Activated naive CD4-positive, alpha-beta T cell treated with anti-CD3 and anti-CD28 coated beads for 36 hours (primary cell): ENCODE measurements at regions of chr20 and their contacts with region 1.

Region 1: DNA sequence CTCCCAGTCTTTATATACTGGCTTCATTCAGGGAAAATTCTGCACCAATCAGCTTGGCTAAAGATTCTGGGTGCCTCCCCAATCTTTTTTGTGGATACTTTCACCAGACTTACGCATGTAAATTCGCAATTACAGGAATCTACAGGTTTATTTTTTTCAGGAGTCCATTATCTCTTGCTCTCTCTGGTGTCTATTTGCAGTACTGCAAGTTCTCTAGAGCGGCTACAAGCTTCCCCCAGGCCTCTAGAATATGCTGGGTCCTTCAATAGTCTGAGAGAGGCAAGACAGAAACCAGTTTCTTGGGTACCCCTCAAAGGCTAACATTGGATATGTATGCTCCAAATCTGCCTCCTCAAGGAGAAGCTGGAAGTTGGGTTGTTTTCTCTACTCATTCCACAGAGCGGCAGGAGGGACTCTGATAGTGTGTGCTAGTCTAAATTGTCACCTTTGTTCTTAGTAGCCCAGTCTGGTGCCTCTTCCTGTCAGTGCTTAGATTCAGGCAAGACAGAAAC is 58.5 kb downstream of the SUN5 start:
- DNase-seq: peak; percentile 58
- H3K4me3 Mint-ChIP-seq: peak overlapping the region; percentile 23
- H3K27ac Mint-ChIP-seq: peak overlapping the region; percentile 92
- H3K4me1 Mint-ChIP-seq: peaks cover 37% of the 10 kb centered on the region
- H3K27me3 Mint-ChIP-seq: no peaks in the 10 kb centered on the region

Region 2: DNA sequence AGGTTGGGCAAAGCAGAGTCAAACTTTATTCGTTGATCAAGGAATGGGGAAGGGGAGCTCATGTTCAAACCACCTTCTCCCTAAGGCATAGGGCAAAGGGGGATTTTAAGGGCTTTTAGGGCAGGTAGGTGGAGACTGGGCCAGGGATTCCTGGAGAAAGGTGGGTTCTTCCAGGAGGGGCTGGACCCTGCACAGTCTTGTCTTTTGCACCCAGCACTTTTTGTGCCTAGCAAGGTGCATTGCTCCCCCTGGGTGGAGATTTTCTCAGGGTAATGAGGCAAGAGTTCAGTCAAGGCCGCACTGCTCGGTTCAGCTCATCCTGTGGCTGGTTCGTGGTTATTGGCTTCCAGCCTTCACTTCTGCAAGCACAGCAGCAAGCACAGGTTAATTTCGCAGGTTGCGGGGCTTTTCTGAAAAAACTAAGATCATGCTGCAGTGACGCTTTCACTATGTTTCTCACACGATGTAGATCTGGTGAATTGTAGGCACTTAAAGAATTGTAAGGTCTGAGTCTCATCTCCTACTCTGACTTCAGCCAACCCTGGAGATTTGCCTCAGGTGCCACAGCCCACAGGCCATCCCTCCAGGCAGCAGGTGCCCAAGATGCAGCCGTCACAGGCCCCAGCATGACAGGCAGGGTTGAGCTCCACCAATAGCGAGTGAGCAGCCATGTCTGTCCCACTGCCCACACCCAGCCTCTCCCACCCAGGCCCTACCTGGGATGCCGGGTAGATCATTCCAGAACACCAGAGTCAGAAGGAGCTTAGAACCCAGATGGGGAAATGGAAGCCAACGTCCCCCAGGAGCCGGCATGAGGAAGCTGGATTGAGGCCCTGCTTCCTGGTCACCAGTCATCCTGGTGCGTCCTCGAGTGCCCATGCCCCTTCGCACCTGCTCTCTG is 21.4 kb after region 1 on chr20:
- CTCF ChIA-PET with region 1: interaction called, 44 read pairs
- intact Hi-C with region 1: loop called (anchors 1 kb)
- DNase-seq: peak; percentile 86
- H3K4me3 Mint-ChIP-seq: peak overlapping the region; percentile 57
- H3K27ac Mint-ChIP-seq: no peak overlapping the region
- H3K4me1 Mint-ChIP-seq: peaks cover 76% of the 10 kb centered on the region
- H3K27me3 Mint-ChIP-seq: no peaks in the 10 kb centered on the region

Region 3: GRCh38 chr20:32972181-32973076 is 26.7 kb after region 1 on chr20:
- CTCF ChIA-PET with region 1: interaction called, 44 read pairs
- intact Hi-C with region 1: loop called (anchors 1 kb)
- DNase-seq: peak; percentile 94
- H3K4me3 Mint-ChIP-seq: no peak overlapping the region
- H3K27ac Mint-ChIP-seq: no peak overlapping the region
- H3K4me1 Mint-ChIP-seq: peaks cover 74% of the 10 kb centered on the region
- H3K27me3 Mint-ChIP-seq: no peaks in the 10 kb centered on the region

Region 4: DNA sequence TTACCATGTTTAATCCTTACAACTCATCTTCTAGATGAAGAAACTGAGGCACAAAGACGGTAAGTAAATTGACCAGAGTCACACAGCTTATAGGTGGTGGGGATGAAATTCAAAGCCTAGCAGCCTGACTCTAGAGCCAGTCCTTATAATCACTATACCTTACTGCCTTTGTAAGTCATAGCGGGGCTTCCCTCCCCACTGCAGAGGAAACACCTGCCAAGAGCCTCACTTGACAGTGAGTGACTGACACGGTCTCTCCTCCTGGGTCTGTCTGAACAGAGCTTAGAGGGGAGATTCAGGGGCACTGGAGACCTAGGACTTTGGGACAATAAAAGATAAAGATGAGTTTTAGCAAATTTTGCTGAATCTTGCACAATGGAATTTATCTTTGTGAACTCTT is 45.6 kb after region 1 on chr20:
- CTCF ChIA-PET with region 1: interaction called, 4 read pairs
- intact Hi-C with region 1: loop called (anchors 1 kb)
- DNase-seq: peak; percentile 68
- H3K4me3 Mint-ChIP-seq: no peak overlapping the region
- H3K27ac Mint-ChIP-seq: no peak overlapping the region
- H3K4me1 Mint-ChIP-seq: peaks cover 37% of the 10 kb centered on the region
- H3K27me3 Mint-ChIP-seq: no peaks in the 10 kb centered on the region

Region 5: GRCh38 chr20:32999603-33000250 is 54.0 kb after region 1 on chr20:
- CTCF ChIA-PET with region 1: interaction called, 37 read pairs
- intact Hi-C with region 1: no loop called
- DNase-seq: no peak
- H3K4me3 Mint-ChIP-seq: no peak overlapping the region
- H3K27ac Mint-ChIP-seq: no peak overlapping the region
- H3K4me1 Mint-ChIP-seq: peaks cover 33% of the 10 kb centered on the region
- H3K27me3 Mint-ChIP-seq: no peaks in the 10 kb centered on the region

Region 6: DNA sequence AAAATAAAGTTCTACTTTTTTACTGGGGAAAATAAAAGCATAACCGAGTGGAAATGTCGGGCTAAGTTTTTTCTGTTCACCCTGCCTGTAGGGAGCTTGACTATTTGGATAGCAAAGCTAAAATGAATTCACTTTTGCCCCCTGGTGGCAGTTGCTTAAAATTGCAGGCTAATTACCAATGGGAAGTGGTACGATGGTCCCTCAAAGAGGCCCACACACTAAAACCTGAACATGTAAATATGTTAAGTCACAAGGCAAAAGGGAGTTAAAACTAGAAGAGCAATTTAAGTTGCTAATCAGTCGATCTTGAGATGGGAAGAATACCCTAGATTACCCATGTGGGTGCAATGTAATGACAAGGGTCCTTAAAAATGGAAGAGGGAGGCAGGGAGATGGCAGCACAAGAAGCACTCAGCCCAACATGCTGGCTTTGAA is 59.4 kb after region 1 on chr20:
- CTCF ChIA-PET with region 1: interaction called, 37 read pairs
- intact Hi-C with region 1: loop called (anchors 1 kb)
- DNase-seq: peak; percentile 60
- H3K4me3 Mint-ChIP-seq: no peak overlapping the region
- H3K27ac Mint-ChIP-seq: no peak overlapping the region
- H3K4me1 Mint-ChIP-seq: peaks cover 24% of the 10 kb centered on the region
- H3K27me3 Mint-ChIP-seq: no peaks in the 10 kb centered on the region

Region 7: GRCh38 chr20:33097001-33097400 is 151.2 kb after region 1 on chr20:
- CTCF ChIA-PET with region 1: interaction called, 9 read pairs
- intact Hi-C with region 1: loop called (anchors 2 kb)
- DNase-seq: no peak
- H3K4me3 Mint-ChIP-seq: no peak overlapping the region
- H3K27ac Mint-ChIP-seq: no peak overlapping the region
- H3K4me1 Mint-ChIP-seq: peaks cover 2% of the 10 kb centered on the region
- H3K27me3 Mint-ChIP-seq: no peaks in the 10 kb centered on the region